B cell (primary cell): ENCODE measurements at regions of chr3 and their contacts with region 1.

Region 1: DNA sequence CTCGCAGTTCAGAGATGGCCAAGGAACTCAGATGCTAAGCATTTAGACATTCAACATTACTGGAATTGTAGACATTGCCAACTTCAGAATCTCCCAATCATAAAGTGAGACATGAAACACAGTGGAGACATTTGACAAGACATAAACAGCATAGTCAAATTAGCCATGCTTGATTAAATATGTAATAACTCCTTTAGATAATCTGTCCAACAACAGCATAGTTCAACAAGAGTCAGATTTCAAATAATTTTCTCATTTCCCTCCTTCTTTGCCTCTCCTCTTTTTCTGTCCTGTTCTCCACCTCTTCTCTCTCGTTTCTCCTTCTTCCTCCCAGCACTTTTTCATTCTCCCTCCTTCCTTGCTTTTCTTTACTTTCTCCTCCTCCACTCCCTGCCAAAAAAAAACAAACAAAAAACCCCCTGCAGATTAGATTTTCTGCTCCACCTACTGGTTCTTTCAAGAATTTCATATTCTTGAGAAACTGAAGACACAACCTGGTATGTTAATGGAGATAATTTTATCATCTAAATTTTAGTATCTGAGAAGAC is 20.2 kb downstream of the CPOX start:
- DNase-seq: peak; percentile 37
- ATAC-seq: peak; percentile 36
- H3K4me3 ChIP-seq: no peak overlapping the region
- H3K4me3 Mint-ChIP-seq: no peak overlapping the region
- H3K27ac ChIP-seq: no peak overlapping the region
- H3K27ac Mint-ChIP-seq: peak overlapping the region; percentile 3
- H3K4me1 ChIP-seq: no peaks in the 10 kb centered on the region
- H3K4me1 Mint-ChIP-seq: peaks cover 3% of the 10 kb centered on the region
- H3K27me3 ChIP-seq: no peaks in the 10 kb centered on the region
- H3K27me3 Mint-ChIP-seq: no peaks in the 10 kb centered on the region
- CTCF ChIP-seq: peak; percentile 69

Region 2: DNA sequence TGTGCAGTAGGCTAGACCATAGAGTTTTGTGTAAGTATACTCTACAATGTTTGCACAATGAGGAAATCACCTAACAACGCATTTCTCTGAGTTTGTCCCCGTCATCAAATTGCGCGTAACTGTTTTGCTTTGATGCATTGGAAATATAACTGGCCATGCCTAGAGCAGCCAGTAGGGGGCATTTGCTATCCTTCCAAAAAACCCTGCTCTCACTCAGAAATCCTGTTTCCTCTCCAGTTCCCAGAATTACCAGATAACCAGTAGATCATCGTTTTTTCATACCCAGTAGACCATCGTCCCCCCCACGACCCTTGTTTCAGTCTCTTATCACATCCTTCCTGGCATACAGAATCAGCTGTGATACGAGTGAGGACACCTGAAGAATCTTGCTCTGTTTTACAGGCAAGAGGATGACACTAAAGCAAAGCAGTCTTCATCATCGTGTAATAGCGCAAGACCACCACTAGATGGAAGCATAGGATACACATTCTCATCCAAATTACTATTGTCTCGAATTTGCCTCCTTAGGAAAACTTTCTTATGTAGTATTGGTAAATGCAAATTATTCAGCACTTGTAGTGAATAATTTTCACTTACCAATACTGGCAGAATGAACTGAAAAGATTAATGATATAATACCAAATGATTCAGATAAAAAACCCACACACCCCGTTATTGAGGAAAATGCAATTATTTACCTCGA is 533.8 kb before region 1 on chr3:
- CTCF ChIA-PET with region 1: interaction called, 26 read pairs
- POLR2A ChIA-PET with region 1: no interaction called
- intact Hi-C with region 1: no loop called
- DNase-seq: peak; percentile 87
- ATAC-seq: peak; percentile 97
- H3K4me3 ChIP-seq: peak overlapping the region in 4 of 5 experiments; percentile 23 to 58 (median 42)
- H3K4me3 Mint-ChIP-seq: peak overlapping the region; percentile 85
- H3K27ac ChIP-seq: no peak overlapping the region
- H3K27ac Mint-ChIP-seq: peak overlapping the region; percentile 59
- H3K4me1 ChIP-seq: peaks cover 0 to 5% of the 10 kb centered on the region in 2 donors
- H3K4me1 Mint-ChIP-seq: peaks cover 5% of the 10 kb centered on the region
- H3K27me3 ChIP-seq: peaks cover 0 to 4% (median 0%) of the 10 kb centered on the region in 4 experiments
- H3K27me3 Mint-ChIP-seq: peaks cover 27% of the 10 kb centered on the region
- CTCF ChIP-seq: peak; percentile 98

Region 3: GRCh38 chr3:98343647-98344507 is 229.4 kb before region 1 on chr3:
- CTCF ChIA-PET with region 1: no interaction called
- POLR2A ChIA-PET with region 1: no interaction called
- intact Hi-C with region 1: loop called (anchors 5 kb)
- DNase-seq: peak; percentile 15
- ATAC-seq: no peak
- H3K4me3 ChIP-seq: no peak overlapping the region
- H3K4me3 Mint-ChIP-seq: no peak overlapping the region
- H3K27ac ChIP-seq: no peak overlapping the region
- H3K27ac Mint-ChIP-seq: no peak overlapping the region
- H3K4me1 ChIP-seq: no peaks in the 10 kb centered on the region
- H3K4me1 Mint-ChIP-seq: no peaks in the 10 kb centered on the region
- H3K27me3 ChIP-seq: no peaks in the 10 kb centered on the region
- H3K27me3 Mint-ChIP-seq: peaks cover 7% of the 10 kb centered on the region
- CTCF ChIP-seq: peak; percentile 27

Region 4: DNA sequence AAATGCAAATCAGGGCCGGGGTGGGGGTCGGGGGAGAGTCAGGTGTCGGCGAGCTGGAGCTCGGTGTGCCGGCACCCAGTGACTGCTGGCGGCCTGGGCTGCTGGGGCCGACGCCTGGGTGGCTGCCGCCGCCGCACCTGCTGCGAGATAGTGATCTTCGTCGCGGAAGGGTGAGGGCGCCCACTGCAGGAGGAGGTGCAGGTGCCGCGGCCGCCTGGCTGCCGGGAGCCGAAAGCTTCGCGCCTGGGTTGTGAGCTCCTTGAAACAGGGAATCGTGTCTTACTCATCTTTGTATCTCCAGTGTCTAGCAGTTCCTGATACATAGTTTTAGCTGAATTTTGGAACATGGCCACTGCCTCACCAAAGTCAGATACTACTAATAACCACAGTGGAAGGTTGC is 84.2 kb after region 1 on chr3:
- CTCF ChIA-PET with region 1: no interaction called
- POLR2A ChIA-PET with region 1: no interaction called
- intact Hi-C with region 1: no loop called
- DNase-seq: peak; percentile 10
- ATAC-seq: no peak
- H3K4me3 ChIP-seq: no peak overlapping the region
- H3K4me3 Mint-ChIP-seq: no peak overlapping the region
- H3K27ac ChIP-seq: no peak overlapping the region
- H3K27ac Mint-ChIP-seq: no peak overlapping the region
- H3K4me1 ChIP-seq: no peaks in the 10 kb centered on the region
- H3K4me1 Mint-ChIP-seq: peaks cover 5% of the 10 kb centered on the region
- H3K27me3 ChIP-seq: peaks cover 0 to 3% (median 0%) of the 10 kb centered on the region in 4 experiments
- H3K27me3 Mint-ChIP-seq: peaks cover 15% of the 10 kb centered on the region
- CTCF ChIP-seq: no peak